ENCODE measurements at regions of chr3 and their contacts with region 1.

Region 1: GRCh38 chr3:33636125-33636850 is 81.8 kb downstream of the CLASP2 start:
- DNase-seq: no peak
- ATAC-seq: no peak

Region 2: DNA sequence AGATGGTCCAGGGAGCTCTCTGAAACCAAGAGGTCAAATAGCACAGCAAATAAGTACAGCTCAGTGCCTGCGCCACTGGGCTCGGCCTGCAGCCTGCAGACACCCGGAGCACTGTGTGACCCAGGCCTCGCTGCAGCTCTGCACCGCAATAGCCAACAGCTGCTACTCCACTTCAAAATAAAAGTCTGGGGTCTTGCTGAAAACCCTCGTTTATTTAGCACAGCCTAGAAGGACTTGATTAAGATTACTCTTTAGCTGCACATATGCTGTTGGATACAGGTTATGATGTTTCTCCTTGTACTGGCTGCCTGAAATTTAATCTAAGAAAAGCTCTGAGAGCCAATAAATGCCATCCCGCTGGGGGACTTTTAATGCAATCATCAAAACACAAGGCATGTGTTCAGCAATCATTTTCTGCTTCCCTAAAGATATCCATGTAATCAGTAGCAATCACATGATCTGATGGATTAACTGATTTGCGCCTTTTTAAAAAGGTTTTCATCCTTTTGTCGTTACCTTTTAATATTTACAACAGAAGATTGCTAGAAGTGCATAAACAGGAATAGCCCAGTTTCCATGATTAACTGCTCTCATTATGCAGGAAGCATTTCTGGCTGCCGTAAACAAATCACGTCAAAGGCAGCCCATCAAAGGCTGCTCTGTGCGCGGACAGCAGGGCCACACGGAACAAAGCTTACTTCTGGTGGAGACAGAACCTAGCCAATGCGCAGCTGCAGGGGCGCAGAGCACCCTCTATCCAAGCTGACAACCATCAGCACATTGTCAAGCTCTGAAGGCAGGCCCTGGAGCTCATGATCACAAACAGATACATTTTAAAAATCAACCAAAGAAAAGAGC is 22.9 kb after region 1 on chr3:
- intact Hi-C with region 1: no loop called
- DNase-seq: peak; percentile 73
- ATAC-seq: peak; percentile 99

Region 3: DNA sequence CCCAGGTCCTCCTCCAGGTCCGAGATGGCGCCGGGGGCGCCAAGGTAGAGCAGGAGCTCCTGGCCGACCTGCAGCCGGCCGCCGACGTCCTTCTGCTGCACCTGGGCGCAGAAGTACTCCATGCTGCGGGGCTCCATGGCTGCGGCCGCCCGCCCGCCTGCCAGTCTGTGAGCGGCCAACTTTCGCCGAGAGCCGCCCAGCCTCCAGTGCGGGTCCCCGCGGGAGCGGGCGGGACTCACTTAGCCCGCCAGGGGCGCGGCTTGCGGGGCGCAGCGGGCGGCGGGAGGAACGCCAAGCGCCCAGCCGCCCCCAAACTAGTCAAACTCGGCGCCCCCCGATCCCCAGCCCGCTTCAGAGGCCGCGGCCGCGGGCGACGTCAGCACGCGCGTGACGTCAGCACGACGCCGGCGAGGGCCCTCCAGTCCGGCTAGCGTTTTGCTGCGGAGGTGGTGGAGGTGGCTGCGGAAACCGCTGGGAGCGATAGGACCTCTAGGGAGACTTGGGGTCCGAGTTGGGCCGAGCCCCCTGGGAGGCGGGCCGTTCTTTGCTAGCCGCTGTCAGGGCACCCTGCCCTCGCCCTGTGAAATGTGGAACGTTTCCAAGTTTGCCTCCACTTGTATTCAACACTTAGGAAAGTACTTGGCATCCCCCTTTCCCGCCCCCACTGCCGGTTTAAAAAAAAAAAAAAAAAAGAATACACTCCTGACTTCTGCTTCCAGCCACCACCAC is 81.7 kb after region 1 on chr3 and contains the start of gene CLASP2:
- intact Hi-C with region 1: loop called in 1 of 2 experiments (anchors 2 kb)
- DNase-seq: peak; percentile 92
- ATAC-seq: peak; percentile 97 to 98
- total RNA-seq, gene CLASP2: 52.9 to 61.4 TPM

Region 4: DNA sequence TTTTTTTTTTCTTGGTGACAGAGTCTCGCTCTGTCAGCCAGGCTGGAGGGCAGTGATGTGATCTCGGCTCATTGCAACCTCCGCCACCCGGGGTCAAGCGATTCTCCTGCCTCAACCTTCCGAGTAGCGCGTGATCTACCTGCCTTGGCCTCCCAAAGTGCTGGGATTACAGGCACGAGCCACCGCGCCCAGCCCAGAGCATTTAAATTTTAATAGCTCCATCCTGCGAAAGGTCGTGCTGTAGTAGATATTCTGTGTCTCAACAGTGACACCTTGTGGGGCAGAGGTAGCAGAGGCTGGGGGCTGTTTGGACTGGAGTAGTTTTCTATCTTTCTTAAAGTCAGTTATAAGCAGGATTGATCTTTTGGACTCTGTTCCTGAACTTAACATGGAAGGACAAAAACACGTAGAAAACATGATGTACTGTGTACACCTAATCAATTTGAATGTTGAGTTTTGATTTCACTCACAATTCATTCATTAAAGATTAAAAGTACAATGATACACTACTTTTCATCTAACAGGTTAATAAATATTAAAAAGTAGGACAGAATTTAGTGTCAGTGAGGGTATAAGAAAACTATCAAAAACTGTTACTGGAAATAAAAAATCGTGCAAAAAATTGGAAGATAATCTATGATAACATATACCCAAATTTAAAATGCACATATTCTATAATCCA is 151.2 kb after region 1 on chr3:
- intact Hi-C with region 1: loop called (anchors 1 to 5 kb)
- DNase-seq: peak; percentile 41
- ATAC-seq: peak; percentile 89 to 93

Measured in left cardiac atrium (tissue), 4 donors.